ENCODE measurements at regions of chr1 and their contacts with region 1.

Region 1: DNA sequence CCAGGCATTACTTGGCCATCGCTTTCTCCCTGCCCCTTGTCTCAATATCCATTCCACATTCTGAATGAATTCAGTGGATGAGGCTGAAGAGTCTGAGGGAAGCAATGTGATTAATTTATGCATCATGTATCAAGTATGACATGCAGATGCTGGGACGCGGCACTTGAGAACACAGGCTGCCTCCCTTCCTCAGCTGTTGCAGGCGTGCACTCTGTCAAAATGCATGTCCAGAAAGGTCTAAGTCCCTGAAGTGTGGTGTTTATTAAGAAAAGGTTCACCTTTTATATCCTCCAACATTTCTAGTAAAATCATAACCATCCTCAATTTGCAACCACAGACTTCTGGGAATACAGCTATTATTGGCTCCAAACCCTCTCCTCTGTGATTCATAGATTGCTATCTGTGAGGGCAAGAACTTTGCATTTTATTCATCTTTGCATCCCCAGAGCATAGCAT is 22.6 kb upstream of the RAB3GAP2 start:
- DNase-seq: no peak
- H3K4me3 ChIP-seq: no peak overlapping the region
- H3K27ac ChIP-seq: no peak overlapping the region
- H3K4me1 ChIP-seq: peaks cover under 1% of the 10 kb centered on the region
- H3K27me3 ChIP-seq: peaks cover 10 to 16% of the 10 kb centered on the region in 2 experiments
- CTCF ChIP-seq: no peak
- POLR2A ChIP-seq: no peak

Region 2: GRCh38 chr1:219741011-219741970 is 553.6 kb before region 1 on chr1:
- CTCF ChIA-PET with region 1: no interaction called
- POLR2A ChIA-PET with region 1: no interaction called
- dilution Hi-C with region 1: no loop called
- intact Hi-C with region 1: no loop called
- DNase-seq: no peak
- H3K4me3 ChIP-seq: no peak overlapping the region
- H3K27ac ChIP-seq: no peak overlapping the region
- H3K4me1 ChIP-seq: no peaks in the 10 kb centered on the region
- H3K27me3 ChIP-seq: no peaks in the 10 kb centered on the region
- CTCF ChIP-seq: no peak
- POLR2A ChIP-seq: no peak

Region 3: GRCh38 chr1:220189750-220190347 is 105.0 kb before region 1 on chr1:
- CTCF ChIA-PET with region 1: interaction called, 15 read pairs
- POLR2A ChIA-PET with region 1: no interaction called
- dilution Hi-C with region 1: no loop called
- intact Hi-C with region 1: no loop called
- DNase-seq: peak; percentile 25
- H3K4me3 ChIP-seq: no peak overlapping the region
- H3K27ac ChIP-seq: no peak overlapping the region
- H3K4me1 ChIP-seq: no peaks in the 10 kb centered on the region
- H3K27me3 ChIP-seq: no peaks in the 10 kb centered on the region
- CTCF ChIP-seq: peak; percentile 18 to 31
- POLR2A ChIP-seq: no peak

Region 4: GRCh38 chr1:220272047-220272840 is 22.6 kb before region 1 on chr1 and contains the start of gene RAB3GAP2:
- CTCF ChIA-PET with region 1: interaction called, 10 read pairs
- POLR2A ChIA-PET with region 1: no interaction called
- dilution Hi-C with region 1: no loop called
- intact Hi-C with region 1: loop called (anchors 2 kb)
- DNase-seq: peak; percentile 95
- H3K4me3 ChIP-seq: peak within 1 kb of the TSS; percentile 63 to 75 (median 63)
- H3K27ac ChIP-seq: peak within 1 kb of the TSS; percentile 72
- H3K4me1 ChIP-seq: peaks cover 14% of the 10 kb centered on the region
- H3K27me3 ChIP-seq: peaks cover 7 to 14% of the 10 kb centered on the region in 2 experiments
- CTCF ChIP-seq: no peak
- POLR2A ChIP-seq: peak; percentile 91
- total RNA-seq, gene RAB3GAP2: 37.0 and 37.4 TPM in 2 replicates

Region 5: DNA sequence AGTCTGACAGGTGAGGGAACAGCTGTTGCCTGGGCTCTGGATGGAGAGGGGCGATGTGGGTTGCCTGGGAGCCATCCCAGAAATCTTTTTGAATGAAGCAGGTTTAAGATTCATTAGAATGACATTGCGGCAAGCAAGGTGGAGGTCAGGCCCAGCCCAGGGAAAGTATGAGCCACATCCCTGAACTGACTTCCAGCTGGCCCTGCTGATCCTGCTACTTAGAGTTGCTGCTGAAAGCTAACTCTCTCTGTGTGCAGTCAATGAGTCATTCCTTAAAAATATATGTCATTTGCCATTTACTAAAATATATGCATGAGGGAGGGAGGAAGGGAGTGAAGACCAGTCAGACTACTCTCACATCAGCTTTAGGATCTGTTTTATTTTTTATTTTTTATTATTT is 31.7 kb after region 1 on chr1:
- CTCF ChIA-PET with region 1: interaction called, 12 read pairs
- POLR2A ChIA-PET with region 1: no interaction called
- dilution Hi-C with region 1: no loop called
- intact Hi-C with region 1: no loop called
- DNase-seq: no peak
- H3K4me3 ChIP-seq: no peak overlapping the region
- H3K27ac ChIP-seq: no peak overlapping the region
- H3K4me1 ChIP-seq: no peaks in the 10 kb centered on the region
- H3K27me3 ChIP-seq: no peaks in the 10 kb centered on the region
- CTCF ChIP-seq: no peak
- POLR2A ChIP-seq: no peak

Region 6: DNA sequence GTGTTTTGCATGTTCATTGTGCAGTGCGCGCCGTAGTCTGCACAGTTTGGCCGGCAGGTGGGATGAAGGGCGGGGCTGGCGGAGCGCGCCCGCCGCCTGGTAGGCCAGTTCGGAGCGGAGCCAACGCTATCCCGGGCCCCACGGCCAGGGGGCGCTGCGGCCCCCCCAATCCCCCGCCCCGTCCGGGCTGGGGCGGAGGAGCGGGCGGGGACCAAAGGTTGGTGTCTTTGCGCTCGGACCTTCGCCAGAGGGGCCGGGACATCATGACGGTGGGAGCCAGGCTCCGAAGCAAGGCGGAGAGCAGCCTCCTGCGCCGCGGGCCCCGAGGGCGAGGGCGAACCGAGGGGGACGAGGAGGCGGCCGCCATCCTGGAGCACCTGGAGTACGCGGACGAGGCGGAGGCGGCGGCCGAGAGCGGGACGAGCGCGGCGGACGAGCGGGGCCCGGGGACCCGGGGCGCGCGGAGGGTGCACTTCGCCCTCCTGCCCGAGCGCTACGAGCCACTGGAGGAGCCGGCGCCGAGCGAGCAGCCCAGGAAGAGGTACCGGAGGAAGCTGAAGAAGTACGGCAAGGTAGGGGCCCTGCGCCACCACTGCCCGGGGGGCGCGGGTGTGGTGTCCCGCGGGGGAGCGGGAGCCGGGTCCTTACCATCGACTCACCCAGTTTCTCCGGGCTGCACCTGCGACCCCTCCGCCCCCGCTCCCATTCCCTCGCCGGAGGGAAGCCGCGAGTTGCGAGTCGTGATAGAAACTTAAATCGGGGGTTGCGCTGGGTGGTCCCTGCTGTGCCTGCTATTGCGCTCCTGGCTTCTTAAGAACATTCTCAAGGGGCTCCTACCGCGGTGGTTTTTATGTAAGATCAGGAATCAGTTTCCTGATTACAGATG is 395.5 kb after region 1 on chr1 and contains the start of gene C1orf115:
- CTCF ChIA-PET with region 1: interaction called, 3 read pairs
- POLR2A ChIA-PET with region 1: no interaction called
- dilution Hi-C with region 1: no loop called
- intact Hi-C with region 1: loop called (anchors 5 kb)
- DNase-seq: peak; percentile 81
- H3K4me3 ChIP-seq: peak within 1 kb of the TSS; percentile 61 to 78 (median 78)
- H3K27ac ChIP-seq: no peak within 1 kb of the TSS
- H3K4me1 ChIP-seq: peaks cover 17% of the 10 kb centered on the region
- H3K27me3 ChIP-seq: no peaks in the 10 kb centered on the region
- CTCF ChIP-seq: peak; percentile 99
- POLR2A ChIP-seq: peak; percentile 54
- total RNA-seq, gene C1orf115: 15.8 and 16.4 TPM in 2 replicates

Measured in endothelial cell of umbilical vein (primary cell).